PC-3 (cell line): ENCODE measurements at regions of chr1 and their contacts with region 1.

Region 1: GRCh38 chr1:100459358-100460114 is 78.4 kb upstream of the GPR88 start:
- DNase-seq: peak; percentile 77
- ATAC-seq: peak; percentile 95
- H3K4me3 ChIP-seq: no peak overlapping the region
- H3K27ac ChIP-seq: no peak overlapping the region
- H3K4me1 ChIP-seq: no peaks in the 10 kb centered on the region
- H3K27me3 ChIP-seq: no peaks in the 10 kb centered on the region
- CTCF ChIP-seq: peak; percentile 94

Region 2: DNA sequence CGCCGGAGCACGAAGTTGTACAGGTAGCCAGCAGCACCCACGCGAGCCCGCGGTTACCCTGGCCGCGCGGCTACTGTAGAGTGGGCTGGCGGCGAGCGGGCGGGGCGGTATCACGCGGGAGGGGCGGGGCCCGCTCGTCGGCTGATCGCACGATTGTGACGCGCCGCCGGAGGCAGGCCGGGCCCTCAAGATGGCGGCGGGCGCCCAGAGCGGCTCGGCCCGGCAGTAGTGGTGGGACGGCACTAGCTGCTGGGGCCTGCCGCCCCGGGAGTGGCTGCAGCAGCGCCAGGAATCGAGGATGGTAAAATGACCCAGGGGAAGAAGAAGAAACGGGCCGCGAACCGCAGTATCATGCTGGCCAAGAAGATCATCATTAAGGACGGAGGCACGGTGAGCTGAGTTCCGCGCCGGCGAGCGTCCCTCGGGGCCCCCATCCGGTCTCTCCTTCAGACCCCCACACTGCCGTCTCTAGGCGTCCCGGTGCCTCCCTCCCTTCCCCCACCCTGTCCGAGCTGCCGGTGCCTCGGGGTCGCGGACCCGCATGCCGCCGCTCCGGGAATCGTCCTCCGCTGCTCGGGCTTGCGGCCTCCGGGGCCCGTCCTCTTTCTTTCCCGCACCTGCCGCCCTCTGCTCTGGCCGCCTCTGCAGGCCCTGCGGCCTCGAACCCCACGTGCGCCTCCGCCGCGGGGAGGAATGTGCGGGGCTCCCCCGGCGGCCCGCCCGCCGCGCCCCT is 421.4 kb before region 1 on chr1:
- CTCF ChIA-PET with region 1: interaction called, 3 read pairs
- POLR2A ChIA-PET with region 1: no interaction called
- intact Hi-C with region 1: loop called (anchors 2 kb)
- DNase-seq: peak; percentile 85
- ATAC-seq: peak; percentile 88
- H3K4me3 ChIP-seq: peak overlapping the region; percentile 77
- H3K27ac ChIP-seq: peak overlapping the region; percentile 81
- H3K4me1 ChIP-seq: peaks cover 20% of the 10 kb centered on the region
- H3K27me3 ChIP-seq: no peaks in the 10 kb centered on the region
- CTCF ChIP-seq: no peak

Region 3: DNA sequence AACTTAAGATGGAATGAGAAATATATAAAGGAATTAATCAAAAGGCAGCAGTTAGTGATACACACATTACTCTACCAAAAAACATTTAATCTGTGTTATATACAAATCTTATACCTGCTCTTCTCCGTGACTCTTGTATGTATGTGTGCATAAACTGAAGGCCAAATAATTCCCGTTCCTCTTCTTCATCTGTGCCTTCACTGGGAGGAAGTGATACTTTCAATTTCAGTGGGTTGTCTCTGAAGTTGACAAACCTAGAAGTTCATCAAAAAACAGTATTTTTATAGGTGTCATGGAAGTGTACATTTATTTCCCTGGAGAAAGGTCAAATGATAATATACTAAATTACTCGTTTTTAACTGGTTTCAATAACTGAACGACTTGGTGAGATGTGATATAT is 307.3 kb before region 1 on chr1:
- CTCF ChIA-PET with region 1: no interaction called
- POLR2A ChIA-PET with region 1: no interaction called
- intact Hi-C with region 1: loop called (anchors 5 kb)
- DNase-seq: no peak
- ATAC-seq: no peak
- H3K4me3 ChIP-seq: no peak overlapping the region
- H3K27ac ChIP-seq: no peak overlapping the region
- H3K4me1 ChIP-seq: no peaks in the 10 kb centered on the region
- H3K27me3 ChIP-seq: no peaks in the 10 kb centered on the region
- CTCF ChIP-seq: no peak

Region 4: DNA sequence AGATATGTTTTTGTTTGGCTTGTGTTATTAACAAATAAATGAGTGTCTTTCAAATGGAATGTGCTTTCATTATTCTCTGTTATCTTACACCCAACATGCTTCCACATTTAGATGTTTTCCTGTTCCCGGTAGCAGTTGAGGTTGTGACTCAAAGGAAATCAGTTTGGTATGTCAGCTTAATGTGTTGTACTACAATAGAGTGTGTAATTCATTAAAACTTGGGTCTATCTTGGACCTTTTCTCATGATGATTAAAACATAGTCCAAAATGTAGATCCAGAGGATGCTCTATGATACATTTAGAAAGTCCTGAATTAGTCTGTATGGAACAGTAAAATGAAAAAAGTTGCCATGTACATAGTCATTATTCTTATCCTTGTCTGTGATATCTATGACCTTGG is 166.8 kb before region 1 on chr1:
- CTCF ChIA-PET with region 1: no interaction called
- POLR2A ChIA-PET with region 1: no interaction called
- intact Hi-C with region 1: loop called (anchors 10 kb)
- DNase-seq: no peak
- ATAC-seq: no peak
- H3K4me3 ChIP-seq: no peak overlapping the region
- H3K27ac ChIP-seq: no peak overlapping the region
- H3K4me1 ChIP-seq: no peaks in the 10 kb centered on the region
- H3K27me3 ChIP-seq: no peaks in the 10 kb centered on the region
- CTCF ChIP-seq: no peak

Region 5: GRCh38 chr1:100606438-100606837 is 146.9 kb after region 1 on chr1:
- CTCF ChIA-PET with region 1: interaction called, 3 read pairs
- POLR2A ChIA-PET with region 1: no interaction called
- intact Hi-C with region 1: loop called (anchors 5 kb)
- DNase-seq: peak; percentile 76
- ATAC-seq: peak; percentile 73
- H3K4me3 ChIP-seq: no peak overlapping the region
- H3K27ac ChIP-seq: no peak overlapping the region
- H3K4me1 ChIP-seq: no peaks in the 10 kb centered on the region
- H3K27me3 ChIP-seq: no peaks in the 10 kb centered on the region
- CTCF ChIP-seq: peak; percentile 93

Region 6: DNA sequence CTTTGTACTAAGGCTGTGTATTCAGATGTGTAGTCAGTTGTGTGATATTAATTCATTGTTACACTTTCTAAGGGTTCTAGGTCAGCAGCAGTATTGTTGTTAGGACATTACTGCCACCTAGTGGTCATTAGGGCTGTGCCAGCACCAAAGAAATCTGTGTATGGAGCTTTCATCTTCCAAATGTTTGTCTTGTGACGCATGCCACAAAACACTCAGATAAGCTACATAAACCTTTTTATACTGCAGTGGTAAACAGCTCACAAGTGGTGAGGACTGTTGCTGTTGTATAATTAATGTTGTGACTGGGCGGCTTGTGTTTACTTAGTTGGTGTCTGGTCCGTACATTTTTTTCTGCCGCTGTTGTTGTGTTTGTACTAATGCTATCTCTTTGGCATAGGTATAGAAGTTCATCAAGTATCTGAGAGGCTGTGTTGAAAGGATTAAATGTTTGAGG is 829.0 kb after region 1 on chr1:
- CTCF ChIA-PET with region 1: no interaction called
- POLR2A ChIA-PET with region 1: no interaction called
- intact Hi-C with region 1: no loop called
- DNase-seq: peak; percentile 97
- ATAC-seq: peak; percentile 93
- H3K4me3 ChIP-seq: no peak overlapping the region
- H3K27ac ChIP-seq: no peak overlapping the region
- H3K4me1 ChIP-seq: peaks cover 30% of the 10 kb centered on the region
- H3K27me3 ChIP-seq: no peaks in the 10 kb centered on the region
- CTCF ChIP-seq: peak; percentile 95